ENCODE measurements at regions of chr21 and their contacts with region 1.

Region 1: GRCh38 chr21:27306791-27307775 is 340.2 kb upstream of the ADAMTS5 start:
- DNase-seq: no peak
- H3K4me3 ChIP-seq: no peak overlapping the region
- H3K27ac ChIP-seq: peak overlapping the region in 1 of 4 donors; percentile 28
- H3K4me1 ChIP-seq: peaks cover 0 to 6% (median 0%) of the 10 kb centered on the region in 4 donors
- H3K27me3 ChIP-seq: no peaks in the 10 kb centered on the region
- CTCF ChIP-seq: no peak
- EP300 ChIP-seq: no peak
- POLR2A ChIP-seq: no peak

Region 2: GRCh38 chr21:27476696-27477095 is 169.6 kb after region 1 on chr21:
- intact Hi-C with region 1: loop called (anchors 10 kb)
- DNase-seq: no peak
- H3K4me3 ChIP-seq: no peak overlapping the region
- H3K27ac ChIP-seq: no peak overlapping the region
- H3K4me1 ChIP-seq: peaks cover 0 to 9% (median 3%) of the 10 kb centered on the region in 4 donors
- H3K27me3 ChIP-seq: no peaks in the 10 kb centered on the region
- CTCF ChIP-seq: peak; percentile 29 to 60 (median 46)
- EP300 ChIP-seq: no peak
- POLR2A ChIP-seq: no peak